ENCODE measurements at regions of chr16 and their contacts with region 1.

Region 1: GRCh38 chr16:3690470-3690928 is 26.8 kb downstream of the TRAP1 start:
- DNase-seq: peak; percentile 63
- ATAC-seq: peak; percentile 99
- H3K4me3 ChIP-seq: no peak overlapping the region
- H3K27ac ChIP-seq: no peak overlapping the region
- H3K4me1 ChIP-seq: 0 out of 2 replicates have a peak, but pooled peaks cover 6% of the 10 kb centered on the region
- H3K27me3 ChIP-seq: no peaks in the 10 kb centered on the region
- CTCF ChIP-seq: peak; percentile 96

Region 2: GRCh38 chr16:4176612-4177417 is 486.3 kb after region 1 on chr16:
- CTCF ChIA-PET with region 1: interaction called, 18 read pairs
- POLR2A ChIA-PET with region 1: no interaction called
- in situ Hi-C with region 1: no loop called
- intact Hi-C with region 1: no loop called
- DNase-seq: no peak
- ATAC-seq: peak; percentile 73; the same call in 1 of the 2 replicates
- H3K4me3 ChIP-seq: no peak overlapping the region
- H3K27ac ChIP-seq: no peak overlapping the region
- H3K4me1 ChIP-seq: no peaks in the 10 kb centered on the region; the same call in 1 of the 2 replicates
- H3K27me3 ChIP-seq: no peaks in the 10 kb centered on the region
- CTCF ChIP-seq: no peak

Measured in Panc1 (cell line).